Posterior vena cava (tissue), 2 donors: ENCODE measurements at regions of chr10 and their contacts with region 1.

Region 1: DNA sequence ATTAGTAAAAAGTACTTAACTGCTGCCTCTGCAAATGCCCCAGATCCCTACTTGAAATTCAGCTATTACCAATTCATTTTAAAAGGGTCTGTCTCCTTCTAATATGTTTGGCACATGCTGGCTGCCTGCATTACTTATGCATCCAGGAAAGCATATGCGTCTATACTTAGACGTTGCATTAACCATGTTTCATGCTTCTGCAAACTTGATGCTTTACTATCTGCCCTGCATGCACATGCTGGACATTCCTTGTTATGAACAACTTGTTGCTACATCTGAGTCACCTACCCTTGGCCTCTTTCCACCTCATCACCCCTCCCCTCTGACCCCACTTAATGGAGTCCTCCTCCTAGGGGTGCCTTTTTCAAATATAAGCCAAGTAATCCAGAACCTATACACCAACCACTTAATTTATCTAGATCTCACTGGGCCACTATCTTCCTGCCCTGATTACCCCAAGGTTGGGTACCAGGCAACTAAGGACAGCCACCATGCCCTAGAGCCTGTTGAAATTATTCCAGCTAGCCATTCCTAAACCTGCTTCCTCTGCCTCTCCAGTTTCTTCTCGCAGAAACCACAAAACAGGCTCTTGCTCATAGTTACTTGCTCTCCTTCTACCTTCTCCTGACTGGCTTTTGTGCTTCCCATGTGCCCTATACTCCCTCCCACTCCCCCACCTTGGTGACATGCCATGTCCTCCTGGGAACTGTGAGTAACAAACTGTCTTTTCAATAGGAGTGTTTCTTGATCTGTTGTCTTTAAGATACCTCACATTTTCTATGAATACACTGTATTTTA is 1187.9 kb downstream of the REEP3 start:
- DNase-seq: no peak

Region 2: GRCh38 chr10:66025186-66025585 is 1316.1 kb after region 1 on chr10:
- intact Hi-C with region 1: loop called in 1 of 2 experiments (anchors 5 kb)
- DNase-seq: no peak